ENCODE measurements at regions of chr4 and their contacts with region 1.

Region 1: DNA sequence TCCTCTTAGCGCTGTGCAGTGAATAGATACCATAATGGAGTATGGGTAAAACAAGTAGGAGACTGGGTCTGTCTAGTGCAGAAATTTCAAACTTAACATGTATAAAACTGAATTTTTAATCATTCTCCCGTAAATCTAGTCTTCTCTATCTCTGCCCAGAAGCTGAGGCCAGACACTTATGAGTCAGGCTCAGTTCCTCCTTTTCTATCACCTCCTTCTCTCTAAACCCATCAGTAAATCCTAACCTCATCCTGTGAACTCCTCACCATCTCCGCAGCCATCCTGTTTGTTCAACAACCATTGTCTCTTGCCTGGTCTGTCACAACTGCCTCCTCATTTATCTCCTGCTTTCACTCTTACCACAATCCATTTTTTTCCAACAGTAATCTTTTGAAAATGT is 19.8 kb upstream of the SGMS2 start:
- DNase-seq: no peak
- ATAC-seq: no peak
- H3K4me3 ChIP-seq: no peak overlapping the region
- H3K27ac ChIP-seq: no peak overlapping the region
- H3K4me1 ChIP-seq: peaks cover 9% of the 10 kb centered on the region; the same call in 1 of the 2 replicates
- H3K27me3 ChIP-seq: 0 out of 5 replicates have a peak, but pooled peaks cover 0 to 4% of the 10 kb centered on the region in 2 experiments
- CTCF ChIP-seq: no peak
- EP300 ChIP-seq: no peak
- POLR2A ChIP-seq: no peak
- RAD21 ChIP-seq: no peak

Region 2: GRCh38 chr4:106746451-106746850 is 1058.5 kb before region 1 on chr4:
- CTCF ChIA-PET with region 1: no interaction called
- POLR2A ChIA-PET with region 1: no interaction called
- in situ Hi-C with region 1: no loop called
- intact Hi-C with region 1: no loop called
- DNase-seq: no peak
- ATAC-seq: no peak
- H3K4me3 ChIP-seq: no peak overlapping the region
- H3K27ac ChIP-seq: no peak overlapping the region
- H3K4me1 ChIP-seq: 0 out of 2 replicates have a peak, but pooled peaks cover 11% of the 10 kb centered on the region
- H3K27me3 ChIP-seq: no peaks in the 10 kb centered on the region
- CTCF ChIP-seq: no peak
- EP300 ChIP-seq: no peak
- POLR2A ChIP-seq: no peak
- RAD21 ChIP-seq: no peak

Region 3: GRCh38 chr4:107312366-107312765 is 492.6 kb before region 1 on chr4:
- CTCF ChIA-PET with region 1: no interaction called
- POLR2A ChIA-PET with region 1: no interaction called
- in situ Hi-C with region 1: no loop called
- intact Hi-C with region 1: no loop called
- DNase-seq: no peak
- ATAC-seq: no peak
- H3K4me3 ChIP-seq: no peak overlapping the region
- H3K27ac ChIP-seq: no peak overlapping the region
- H3K4me1 ChIP-seq: no peaks in the 10 kb centered on the region
- H3K27me3 ChIP-seq: no peaks in the 10 kb centered on the region
- CTCF ChIP-seq: no peak
- EP300 ChIP-seq: no peak
- POLR2A ChIP-seq: no peak
- RAD21 ChIP-seq: no peak

Region 4: GRCh38 chr4:107863850-107864371 is 59.0 kb after region 1 on chr4:
- CTCF ChIA-PET with region 1: no interaction called
- POLR2A ChIA-PET with region 1: no interaction called
- in situ Hi-C with region 1: no loop called
- intact Hi-C with region 1: loop called (anchors 5 kb)
- DNase-seq: peak; percentile 52
- ATAC-seq: peak; percentile 99
- H3K4me3 ChIP-seq: no peak overlapping the region
- H3K27ac ChIP-seq: no peak overlapping the region
- H3K4me1 ChIP-seq: peaks cover 9% of the 10 kb centered on the region
- H3K27me3 ChIP-seq: no peaks in the 10 kb centered on the region
- CTCF ChIP-seq: no peak
- EP300 ChIP-seq: no peak
- POLR2A ChIP-seq: no peak
- RAD21 ChIP-seq: no peak